Posterior vena cava (tissue), 2 donors: ENCODE measurements at regions of chr2 and their contacts with region 1.

Region 1: GRCh38 chr2:137775521-137775920 is 188.8 kb upstream of the HNMT start:
- DNase-seq: no peak

Region 2: GRCh38 chr2:135997380-135997779 is 1778.1 kb before region 1 on chr2:
- intact Hi-C with region 1: loop called in 1 of 2 experiments (anchors 10 kb)
- DNase-seq: no peak